Transverse colon (tissue), 4 donors: ENCODE measurements at regions of chr1 and their contacts with region 1.

Region 1: DNA sequence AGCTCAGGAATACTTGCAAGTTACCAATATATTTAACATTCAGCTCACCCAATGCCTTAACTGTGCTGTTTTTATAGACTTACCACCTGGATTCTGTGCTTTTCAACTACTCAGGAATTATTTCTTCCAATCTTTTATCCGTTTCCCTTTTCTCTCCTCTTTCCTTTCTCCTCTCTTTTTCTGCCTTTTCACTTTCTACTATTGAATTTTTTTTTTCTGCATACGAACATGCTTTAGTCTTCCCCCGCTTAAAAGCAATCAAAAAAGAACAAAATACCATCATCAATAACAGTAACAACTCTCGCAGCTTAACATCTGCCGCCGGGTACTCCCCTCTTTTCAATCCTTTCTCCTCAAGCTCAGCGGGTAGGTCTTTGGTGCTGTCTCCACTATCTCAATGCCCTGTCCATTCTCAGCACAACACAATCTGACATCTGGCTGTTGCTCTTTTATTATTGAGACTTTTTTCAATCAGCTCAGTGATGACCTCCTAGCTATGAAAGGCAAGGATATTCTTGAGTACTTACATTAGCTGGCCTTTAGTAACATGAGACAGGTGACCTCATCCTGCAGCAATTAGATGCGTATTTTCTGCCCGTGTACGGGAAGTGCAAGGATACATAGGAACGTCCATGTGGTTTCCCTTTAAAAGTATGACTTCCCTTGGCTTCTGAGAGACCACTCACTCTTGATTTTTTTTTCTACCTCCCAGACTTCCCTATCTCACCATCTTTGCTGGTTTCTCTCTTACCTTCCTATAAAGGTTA is 40.2 kb upstream of the SIPA1L2 start:
- DNase-seq: no peak
- H3K4me3 ChIP-seq: no peak overlapping the region
- H3K27ac ChIP-seq: no peak overlapping the region
- H3K4me1 ChIP-seq: peaks cover 0 to 6% (median 0%) of the 10 kb centered on the region in 4 donors
- H3K27me3 ChIP-seq: no peaks in the 10 kb centered on the region
- CTCF ChIP-seq: no peak
- EP300 ChIP-seq: no peak
- POLR2A ChIP-seq: no peak

Region 2: GRCh38 chr1:231383159-231383860 is 1286.9 kb before region 1 on chr1:
- in situ Hi-C with region 1: no loop called
- intact Hi-C with region 1: loop called (anchors 5 kb)
- DNase-seq: no peak
- H3K4me3 ChIP-seq: no peak overlapping the region
- H3K27ac ChIP-seq: peak overlapping the region in 1 of 4 donors; percentile 52
- H3K4me1 ChIP-seq: peaks cover 0 to 30% (median 7%) of the 10 kb centered on the region in 4 donors
- H3K27me3 ChIP-seq: no peaks in the 10 kb centered on the region
- CTCF ChIP-seq: no peak
- EP300 ChIP-seq: no peak
- POLR2A ChIP-seq: no peak

Region 3: GRCh38 chr1:232923739-232924386 is 253.7 kb after region 1 on chr1:
- in situ Hi-C with region 1: no loop called
- intact Hi-C with region 1: no loop called
- DNase-seq: no peak
- H3K4me3 ChIP-seq: no peak overlapping the region
- H3K27ac ChIP-seq: no peak overlapping the region
- H3K4me1 ChIP-seq: no peaks in the 10 kb centered on the region
- H3K27me3 ChIP-seq: no peaks in the 10 kb centered on the region
- CTCF ChIP-seq: no peak
- EP300 ChIP-seq: no peak
- POLR2A ChIP-seq: no peak

Region 4: DNA sequence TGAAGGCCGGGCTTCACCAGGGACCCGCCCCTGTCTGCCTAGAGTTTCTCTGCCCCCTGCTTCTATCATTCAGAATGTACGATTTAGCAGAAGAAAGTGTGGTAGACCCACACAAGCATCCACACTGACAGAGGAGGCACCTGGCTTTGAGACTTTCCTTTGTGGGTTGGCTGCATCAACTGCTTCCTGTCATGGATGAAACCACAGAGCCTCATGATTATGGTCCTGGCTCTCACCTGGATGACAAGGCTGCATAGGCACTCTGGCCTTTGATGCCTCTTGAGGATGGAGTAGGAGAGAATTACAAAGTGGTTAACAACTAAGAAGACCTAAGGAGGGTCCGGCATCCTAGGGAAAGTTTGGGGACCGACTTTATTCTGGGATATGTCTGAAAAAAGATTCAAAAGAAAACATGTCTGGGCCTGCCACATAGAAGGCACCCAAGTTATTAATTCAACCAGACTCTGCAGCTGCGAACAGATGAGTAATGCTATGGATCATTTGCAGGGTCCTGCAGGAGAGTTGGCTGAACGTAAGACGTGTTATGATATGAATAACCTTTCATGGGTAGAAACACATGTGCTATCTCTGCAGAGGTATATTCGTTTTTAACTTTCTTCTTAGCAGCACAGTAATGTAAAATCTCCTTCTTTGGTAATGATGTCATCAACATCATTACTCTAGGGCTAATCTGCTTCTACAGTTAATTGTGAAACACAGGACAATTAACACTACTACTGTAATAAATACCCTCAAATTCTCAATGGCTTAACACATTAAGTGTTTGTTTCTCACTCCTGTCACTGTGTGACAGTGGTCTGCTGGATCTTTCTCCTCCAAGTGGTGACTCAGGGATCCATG is 1370.5 kb after region 1 on chr1:
- in situ Hi-C with region 1: no loop called
- intact Hi-C with region 1: loop called (anchors 10 kb)
- DNase-seq: no peak
- H3K4me3 ChIP-seq: no peak overlapping the region
- H3K27ac ChIP-seq: no peak overlapping the region
- H3K4me1 ChIP-seq: no peaks in the 10 kb centered on the region
- H3K27me3 ChIP-seq: no peaks in the 10 kb centered on the region
- CTCF ChIP-seq: no peak
- EP300 ChIP-seq: no peak
- POLR2A ChIP-seq: no peak